Activated CD4-positive, alpha-beta T cell treated with anti-CD3 and anti-CD28 coated beads for 36 hours (primary cell): ENCODE measurements at regions of chr2 and their contacts with region 1.

Region 1: DNA sequence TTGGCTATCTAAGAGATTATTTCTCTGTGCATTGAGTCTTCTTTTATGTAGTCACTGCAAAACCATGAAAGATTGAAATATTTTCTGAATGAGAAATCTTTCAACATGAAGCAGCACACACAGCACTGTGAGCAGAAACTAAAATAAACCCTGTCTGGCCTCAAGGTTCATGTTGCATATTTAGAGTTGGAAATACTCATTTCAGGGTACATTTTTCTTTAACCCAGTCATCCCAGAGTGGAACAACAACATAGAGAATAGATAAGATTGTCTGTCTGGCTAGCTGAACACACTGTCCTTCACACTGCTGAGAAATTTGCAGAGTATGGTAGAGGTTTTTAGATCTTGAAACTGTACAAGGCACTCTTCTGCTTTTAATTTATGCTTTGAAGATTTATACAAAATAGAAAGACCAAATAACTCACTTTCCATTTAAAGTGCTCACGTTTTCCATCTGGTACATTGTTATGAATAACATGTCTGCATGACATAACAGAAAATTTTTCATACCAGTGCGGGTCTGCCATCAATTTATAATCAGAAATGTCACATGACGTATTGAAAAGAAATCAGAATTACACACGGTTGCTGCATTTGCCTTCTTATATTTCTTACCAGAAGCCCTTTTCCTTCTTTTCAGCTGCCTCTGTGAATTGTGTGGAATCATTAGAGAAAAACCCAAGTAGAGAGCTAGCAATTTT is 25.0 kb upstream of the FN1 start:
- DNase-seq: no peak
- ATAC-seq: no peak
- H3K4me3 Mint-ChIP-seq: no peak overlapping the region
- H3K27ac Mint-ChIP-seq: no peak overlapping the region
- H3K4me1 Mint-ChIP-seq: no peaks in the 10 kb centered on the region
- H3K27me3 Mint-ChIP-seq: peaks cover 10% of the 10 kb centered on the region

Region 2: DNA sequence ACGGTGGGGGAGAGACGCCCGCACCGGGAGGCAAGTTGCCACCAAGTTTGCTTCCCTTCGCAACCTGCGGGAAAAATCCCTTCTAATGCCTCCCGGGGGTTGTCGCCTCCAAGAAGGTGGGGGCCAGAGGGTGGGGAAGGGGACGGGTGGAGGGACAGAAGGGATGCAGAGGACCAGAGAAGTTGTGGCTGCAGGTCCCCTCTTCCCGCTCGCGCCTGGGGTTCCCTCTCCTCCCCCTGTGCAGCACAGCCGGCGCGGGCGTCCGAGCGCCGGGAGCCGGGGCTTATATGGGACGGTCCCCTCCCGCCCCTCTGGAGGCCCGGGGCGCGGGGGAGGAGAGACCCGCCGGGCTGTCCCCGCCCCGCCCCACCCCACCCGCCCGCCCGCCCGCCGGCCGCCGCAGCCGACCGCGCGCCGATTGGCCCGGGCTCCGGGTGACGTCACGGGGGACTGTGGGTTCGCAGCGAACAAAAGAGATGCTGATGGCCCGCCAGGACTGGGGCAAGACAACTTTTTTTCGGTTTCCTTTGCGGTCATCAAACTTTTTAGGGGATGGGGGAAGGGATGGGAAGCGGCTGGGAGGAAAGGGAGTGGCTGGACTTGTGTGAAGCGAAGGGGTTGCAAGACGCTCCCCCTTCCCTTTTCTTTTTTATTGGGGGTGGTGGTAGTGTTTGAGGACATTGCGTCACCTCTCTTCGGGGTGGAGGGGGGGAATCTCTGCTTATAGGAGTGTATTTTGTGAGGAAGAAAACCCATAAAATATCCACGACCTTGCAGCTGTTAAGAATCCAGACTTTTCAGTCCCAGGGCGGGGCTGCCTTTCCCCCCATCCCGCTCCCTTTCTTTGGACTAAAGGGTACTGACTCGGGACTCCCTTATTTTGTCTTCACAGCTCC is 24.8 kb before region 1 on chr2 and contains the start of gene FN1:
- CTCF ChIA-PET with region 1: no interaction called
- POLR2A ChIA-PET with region 1: no interaction called
- intact Hi-C with region 1: no loop called
- DNase-seq: peak; percentile 77
- ATAC-seq: peak; percentile 75
- H3K4me3 Mint-ChIP-seq: peak within 1 kb of the TSS; percentile 70
- H3K27ac Mint-ChIP-seq: no peak within 1 kb of the TSS
- H3K4me1 Mint-ChIP-seq: peaks cover 13% of the 10 kb centered on the region
- H3K27me3 Mint-ChIP-seq: peaks cover 56% of the 10 kb centered on the region
- total RNA-seq, gene FN1: 0.59 to 0.70 TPM

Region 3: DNA sequence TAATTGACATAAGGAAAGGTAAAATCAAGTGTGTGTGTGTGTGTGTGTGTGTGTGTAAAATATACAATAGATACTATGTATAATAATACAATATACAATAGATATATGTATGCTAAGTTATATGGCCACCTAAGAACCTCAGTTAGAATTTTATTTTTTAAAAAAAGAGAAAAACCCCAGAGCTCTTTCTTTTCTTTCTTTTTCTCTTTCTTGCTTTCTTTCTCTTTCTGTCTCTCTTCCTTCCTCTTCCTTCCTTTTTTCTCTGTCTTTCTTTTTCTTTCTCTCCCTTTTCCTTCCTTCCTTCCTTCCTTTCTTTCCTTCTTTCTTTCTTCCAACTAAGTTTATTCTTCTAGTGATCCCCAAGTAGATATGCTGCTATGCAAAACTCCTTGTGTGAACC is 39.6 kb after region 1 on chr2:
- CTCF ChIA-PET with region 1: no interaction called
- POLR2A ChIA-PET with region 1: interaction called, 3 read pairs
- intact Hi-C with region 1: loop called in 1 of 2 experiments (anchors 1 kb)
- DNase-seq: no peak
- ATAC-seq: no peak
- H3K4me3 Mint-ChIP-seq: no peak overlapping the region
- H3K27ac Mint-ChIP-seq: no peak overlapping the region
- H3K4me1 Mint-ChIP-seq: no peaks in the 10 kb centered on the region
- H3K27me3 Mint-ChIP-seq: peaks cover 11% of the 10 kb centered on the region